HEK293 (cell line): ENCODE measurements at regions of chr2 and their contacts with region 1.

Region 1: GRCh38 chr2:1997409-1997808 is 253.1 kb upstream of the PXDN start:
- H3K4me3 ChIP-seq: no peak overlapping the region
- H3K27ac ChIP-seq: no peak overlapping the region
- H3K4me1 ChIP-seq: no peaks in the 10 kb centered on the region
- CTCF ChIP-seq: no peak

Region 2: DNA sequence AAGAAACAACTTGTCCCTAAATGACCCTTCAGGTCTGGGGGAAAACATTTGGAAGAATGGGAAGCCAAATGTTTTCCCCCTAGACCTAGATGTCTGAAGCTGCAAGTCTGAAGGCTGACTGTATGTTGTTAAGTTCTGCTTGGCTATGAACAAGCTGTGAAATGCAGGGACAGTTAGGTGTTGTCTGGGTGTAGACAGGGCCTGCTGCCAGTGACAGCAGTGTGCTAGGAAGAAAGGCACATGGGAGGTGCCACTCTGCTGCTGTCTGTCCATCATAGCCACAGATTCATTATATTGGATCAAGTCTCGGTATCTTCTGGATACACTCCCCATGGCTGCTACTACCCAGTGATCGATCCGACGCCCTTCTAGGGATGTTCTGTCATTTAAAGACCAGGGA is 12.8 kb after region 1 on chr2:
- CTCF ChIA-PET with region 1: no interaction called
- POLR2A ChIA-PET with region 1: interaction called, 11 read pairs
- H3K4me3 ChIP-seq: no peak overlapping the region
- H3K27ac ChIP-seq: no peak overlapping the region
- H3K4me1 ChIP-seq: no peaks in the 10 kb centered on the region
- CTCF ChIP-seq: no peak